IMR-90 (cell line): ENCODE measurements at regions of chr9 and their contacts with region 1.

Region 1: GRCh38 chr9:21395778-21396717 is 10.8 kb upstream of the IFNA2 start:
- DNase-seq: no peak
- ATAC-seq: peak; percentile 85
- H3K4me3 ChIP-seq: peak overlapping the region; percentile 39
- H3K27ac ChIP-seq: no peak overlapping the region
- H3K4me1 ChIP-seq: no peaks in the 10 kb centered on the region
- H3K27me3 ChIP-seq: peaks cover 49% of the 10 kb centered on the region
- CTCF ChIP-seq: peak; percentile 61
- POLR2A ChIP-seq: no peak
- RAD21 ChIP-seq: peak; percentile 22

Region 2: DNA sequence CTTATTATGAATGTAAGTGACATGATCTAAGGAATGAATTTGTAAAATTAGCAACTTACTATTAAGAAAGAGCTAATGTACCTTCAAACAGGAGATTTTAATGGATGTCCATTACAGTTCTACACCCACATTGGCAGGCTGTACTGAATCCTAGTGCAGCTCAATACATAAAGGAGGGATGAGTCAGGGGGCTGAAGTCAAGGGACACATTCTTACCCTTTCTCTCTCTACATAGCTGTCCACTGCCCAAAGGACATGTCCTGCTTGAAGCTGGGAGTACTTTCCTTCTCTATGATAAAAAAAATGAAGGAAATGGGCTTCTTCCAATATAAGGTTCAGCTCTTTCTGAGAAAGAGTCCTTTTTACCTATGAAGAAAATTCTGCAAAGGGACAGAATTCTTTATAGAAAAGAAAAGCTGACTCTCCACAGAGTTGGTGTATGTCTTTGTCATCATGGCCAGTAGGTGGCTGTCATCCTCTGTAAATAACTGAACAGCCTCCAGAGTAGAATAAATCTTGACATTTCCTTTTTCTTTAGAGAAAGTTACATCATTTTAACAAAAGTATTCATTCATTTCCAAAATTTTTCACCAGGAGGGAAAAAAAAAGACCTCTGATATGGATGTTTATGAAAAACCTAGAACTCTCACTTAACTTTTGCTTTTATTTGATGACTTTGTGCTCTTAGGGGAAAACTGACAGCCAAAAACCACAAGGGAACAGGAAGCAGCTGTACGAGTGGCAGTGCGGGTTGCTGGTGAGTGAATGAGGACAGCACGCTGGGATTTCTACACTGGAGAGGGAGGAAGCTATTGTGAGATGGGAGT is 143.1 kb before region 1 on chr9:
- CTCF ChIA-PET with region 1: interaction called, 5 read pairs
- POLR2A ChIA-PET with region 1: no interaction called
- dilution Hi-C with region 1: no loop called
- in situ Hi-C with region 1: no loop called
- intact Hi-C with region 1: loop called (anchors 5 kb)
- DNase-seq: peak; percentile 14
- ATAC-seq: peak; percentile 62; the same call in 1 of the 2 replicates
- H3K4me3 ChIP-seq: no peak overlapping the region
- H3K27ac ChIP-seq: no peak overlapping the region
- H3K4me1 ChIP-seq: 0 out of 2 replicates have a peak, but pooled peaks cover 1% of the 10 kb centered on the region
- H3K27me3 ChIP-seq: peaks cover 19% of the 10 kb centered on the region
- CTCF ChIP-seq: peak; percentile 34
- POLR2A ChIP-seq: no peak
- RAD21 ChIP-seq: 0 out of 2 replicates have a peak, but pooled peaks have one; percentile 17

Region 3: GRCh38 chr9:21317956-21318923 is 77.8 kb before region 1 on chr9:
- CTCF ChIA-PET with region 1: interaction called, 6 read pairs
- POLR2A ChIA-PET with region 1: no interaction called
- dilution Hi-C with region 1: no loop called
- in situ Hi-C with region 1: no loop called
- intact Hi-C with region 1: loop called (anchors 2 kb)
- DNase-seq: peak; percentile 50
- ATAC-seq: peak; percentile 91
- H3K4me3 ChIP-seq: no peak overlapping the region
- H3K27ac ChIP-seq: no peak overlapping the region
- H3K4me1 ChIP-seq: peaks cover 2% of the 10 kb centered on the region; the same call in 1 of the 2 replicates
- H3K27me3 ChIP-seq: peaks cover 6% of the 10 kb centered on the region
- CTCF ChIP-seq: peak; percentile 75
- POLR2A ChIP-seq: no peak
- RAD21 ChIP-seq: peak; percentile 56

Region 4: DNA sequence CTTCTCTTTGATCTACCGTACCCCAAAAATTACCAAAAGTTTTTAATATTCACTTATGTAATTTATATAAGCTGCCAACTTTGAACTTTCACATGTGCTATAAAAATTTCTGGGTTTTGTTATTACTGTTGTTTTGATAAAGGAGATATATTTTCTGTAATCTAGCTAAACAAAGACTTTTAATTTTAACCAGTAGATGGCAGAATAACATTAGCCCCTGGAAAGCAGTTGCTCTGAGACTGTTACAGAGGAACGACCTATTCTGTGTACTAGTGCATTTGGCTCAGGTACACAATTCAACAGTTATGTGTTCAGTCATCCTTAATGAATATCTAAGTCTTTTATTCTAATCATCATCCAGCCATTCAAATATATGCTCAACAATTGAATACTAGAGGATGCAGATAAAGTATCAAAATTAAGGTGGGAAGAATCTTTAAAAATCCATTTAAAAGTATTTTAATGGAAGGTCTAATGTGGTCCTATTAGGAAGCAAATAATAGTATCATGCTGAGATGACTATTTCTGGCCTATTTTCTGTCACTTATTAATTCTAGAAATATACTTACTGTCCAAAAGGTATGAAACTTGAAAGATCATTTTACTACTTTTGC is 69.4 kb before region 1 on chr9:
- CTCF ChIA-PET with region 1: interaction called, 11 read pairs
- POLR2A ChIA-PET with region 1: no interaction called
- dilution Hi-C with region 1: no loop called
- in situ Hi-C with region 1: no loop called
- intact Hi-C with region 1: loop called (anchors 2 kb)
- DNase-seq: peak; percentile 44
- ATAC-seq: peak; percentile 78
- H3K4me3 ChIP-seq: no peak overlapping the region
- H3K27ac ChIP-seq: no peak overlapping the region
- H3K4me1 ChIP-seq: 0 out of 2 replicates have a peak, but pooled peaks cover under 1% of the 10 kb centered on the region
- H3K27me3 ChIP-seq: no peaks in the 10 kb centered on the region
- CTCF ChIP-seq: peak; percentile 72
- POLR2A ChIP-seq: no peak
- RAD21 ChIP-seq: peak; percentile 83

Region 5: GRCh38 chr9:21334701-21335632 is 61.1 kb before region 1 on chr9 and contains the start of gene KLHL9:
- CTCF ChIA-PET with region 1: interaction called, 11 read pairs
- POLR2A ChIA-PET with region 1: no interaction called
- dilution Hi-C with region 1: no loop called
- in situ Hi-C with region 1: no loop called
- intact Hi-C with region 1: no loop called
- DNase-seq: peak; percentile 88
- ATAC-seq: peak; percentile 98
- H3K4me3 ChIP-seq: peak within 1 kb of the TSS; percentile 94
- H3K27ac ChIP-seq: peak within 1 kb of the TSS; percentile 96
- H3K4me1 ChIP-seq: peaks cover 7% of the 10 kb centered on the region
- H3K27me3 ChIP-seq: peaks cover 4% of the 10 kb centered on the region; the same call in 1 of the 2 replicates
- CTCF ChIP-seq: no peak
- POLR2A ChIP-seq: peak; percentile 79; the same call in 1 of the 2 replicates
- RAD21 ChIP-seq: no peak
- total RNA-seq, gene KLHL9: 46.4 and 68.6 TPM in 2 replicates

Region 6: DNA sequence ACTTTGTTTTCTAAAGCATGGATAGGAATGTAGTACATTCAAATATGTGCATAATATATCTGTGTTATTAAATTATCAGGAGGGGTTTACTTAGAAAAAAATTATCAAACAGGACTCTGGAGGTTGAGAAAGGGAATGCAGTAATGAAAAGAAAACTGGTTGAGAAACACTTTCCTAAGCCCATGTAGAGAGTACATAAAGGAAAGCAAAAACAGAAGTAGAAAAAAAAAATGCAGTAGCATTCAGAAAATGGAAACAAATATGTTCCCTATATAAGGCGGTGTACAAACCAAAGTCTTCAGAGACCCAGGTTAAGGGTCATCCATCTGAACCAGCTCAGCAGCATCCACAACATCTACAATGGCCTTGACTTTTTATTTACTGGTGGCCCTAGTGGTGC is 12.8 kb after region 1 on chr9 and contains the start of gene IFNA8:
- CTCF ChIA-PET with region 1: interaction called, 10 read pairs
- POLR2A ChIA-PET with region 1: no interaction called
- dilution Hi-C with region 1: no loop called
- in situ Hi-C with region 1: no loop called
- intact Hi-C with region 1: no loop called
- DNase-seq: no peak
- ATAC-seq: no peak
- H3K4me3 ChIP-seq: no peak within 1 kb of the TSS
- H3K27ac ChIP-seq: no peak within 1 kb of the TSS
- H3K4me1 ChIP-seq: no peaks in the 10 kb centered on the region
- H3K27me3 ChIP-seq: peaks cover 26% of the 10 kb centered on the region
- CTCF ChIP-seq: no peak
- POLR2A ChIP-seq: no peak
- RAD21 ChIP-seq: no peak
- total RNA-seq, gene IFNA8: not detected in 2 replicates

Region 7: GRCh38 chr9:21454149-21454548 is 58.1 kb after region 1 on chr9:
- CTCF ChIA-PET with region 1: no interaction called
- POLR2A ChIA-PET with region 1: no interaction called
- dilution Hi-C with region 1: no loop called
- in situ Hi-C with region 1: no loop called
- intact Hi-C with region 1: no loop called
- DNase-seq: peak; percentile 51
- ATAC-seq: no peak
- H3K4me3 ChIP-seq: no peak overlapping the region
- H3K27ac ChIP-seq: no peak overlapping the region
- H3K4me1 ChIP-seq: peaks cover 4% of the 10 kb centered on the region; the same call in 1 of the 2 replicates
- H3K27me3 ChIP-seq: no peaks in the 10 kb centered on the region
- CTCF ChIP-seq: no peak
- POLR2A ChIP-seq: no peak
- RAD21 ChIP-seq: no peak